Prostate gland (tissue), 2 donors: ENCODE measurements at regions of chr9 and their contacts with region 1.

Region 1: DNA sequence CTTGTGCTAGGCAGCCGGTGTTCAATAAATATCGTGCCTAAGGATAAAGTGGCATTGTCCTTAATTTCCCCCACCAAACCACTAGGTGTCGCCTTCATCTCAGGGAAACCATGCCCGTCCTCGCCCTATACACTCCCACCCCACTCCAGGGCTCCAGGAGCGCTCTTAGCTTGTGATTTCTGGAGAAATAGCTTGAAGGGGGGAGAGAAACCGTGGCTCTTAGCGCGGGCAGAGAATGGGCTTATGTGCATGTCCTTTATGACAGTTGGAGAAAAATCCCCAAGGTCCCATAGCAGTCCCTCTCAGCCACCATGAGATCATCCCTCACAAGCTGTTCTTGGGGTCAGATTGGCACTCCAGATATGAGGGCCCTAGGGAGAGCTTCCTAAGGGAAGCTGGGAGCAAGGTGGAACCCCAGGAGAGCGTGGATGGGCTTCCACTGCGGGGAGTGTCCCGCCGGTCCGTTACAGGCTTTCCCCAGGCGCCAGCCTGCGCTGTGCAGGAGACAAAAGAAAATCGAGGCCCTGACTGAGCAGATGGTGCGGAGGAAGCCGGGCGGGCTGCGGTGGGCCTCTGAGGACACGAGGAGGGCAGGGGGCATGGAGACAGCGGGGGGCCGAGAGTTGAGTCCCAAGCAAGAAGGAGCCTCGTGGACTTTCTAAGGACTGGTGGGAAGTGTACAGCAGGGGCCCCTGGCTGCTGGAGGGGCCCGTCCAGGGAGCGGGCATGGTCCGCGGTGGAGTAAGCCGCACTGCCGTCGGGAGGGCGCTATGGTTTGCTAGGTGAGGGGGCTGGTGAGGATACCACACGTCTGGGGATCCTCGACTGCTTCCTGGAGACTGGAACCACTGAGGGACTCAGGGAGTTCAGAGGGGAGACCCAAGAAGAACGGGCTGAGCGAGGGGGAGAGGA is 750 bp upstream of the NPR2 start:
- DNase-seq: peak; percentile 74
- H3K4me3 ChIP-seq: peak overlapping the region; percentile 41 to 50
- H3K27ac ChIP-seq: peak overlapping the region; percentile 36 to 76
- H3K4me1 ChIP-seq: no peaks in the 10 kb centered on the region
- H3K27me3 ChIP-seq: no peaks in the 10 kb centered on the region
- CTCF ChIP-seq: peak; percentile 70 to 90 (median 84)
- POLR2A ChIP-seq: no peak

Region 2: DNA sequence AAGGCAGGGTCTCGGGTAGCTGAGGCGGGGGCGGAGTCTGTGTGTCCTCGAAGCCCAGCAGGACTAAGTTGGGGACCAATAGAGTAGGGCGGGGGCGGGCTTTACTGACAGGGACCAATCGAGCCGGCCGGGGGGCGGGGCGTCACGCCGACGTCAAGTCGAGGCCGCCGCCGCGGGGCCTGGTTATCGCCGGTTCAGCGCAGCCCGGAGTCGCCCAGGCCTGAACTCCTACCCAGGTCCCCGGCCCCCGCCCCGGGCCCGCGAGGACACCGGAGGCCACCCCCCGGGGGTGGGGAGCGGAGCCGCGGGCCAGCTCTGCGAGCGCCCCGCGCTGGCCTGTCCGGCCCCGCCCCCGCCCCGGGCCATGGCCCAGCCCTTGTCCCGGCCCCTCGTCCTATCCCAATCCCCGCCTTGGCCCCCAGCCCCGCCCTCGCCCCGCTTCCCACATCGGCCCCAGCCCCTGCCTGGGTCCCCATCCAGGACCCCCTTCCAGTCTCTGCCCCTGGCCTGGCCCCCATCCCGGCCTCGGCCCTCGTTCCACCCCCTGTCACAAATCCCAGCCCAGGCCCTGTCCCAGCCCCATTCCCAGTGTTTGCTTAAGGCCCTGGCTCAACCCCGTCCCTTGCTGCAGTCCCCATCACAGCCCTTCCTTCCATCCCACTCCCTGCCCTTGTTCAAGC is 38.6 kb after region 1 on chr9 and contains the start of gene TMEM8B:
- intact Hi-C with region 1: loop called (anchors 2 kb)
- DNase-seq: peak; percentile 99
- H3K4me3 ChIP-seq: peak within 1 kb of the TSS; percentile 73 to 99
- H3K27ac ChIP-seq: peak within 1 kb of the TSS; percentile 89 to 99
- H3K4me1 ChIP-seq: peaks cover 35% of the 10 kb centered on the region
- H3K27me3 ChIP-seq: no peaks in the 10 kb centered on the region
- CTCF ChIP-seq: peak in 1 of 4 experiments; percentile 10
- POLR2A ChIP-seq: peak; percentile 70
- total RNA-seq, gene TMEM8B: 15.8 to 25.9 TPM

Region 3: DNA sequence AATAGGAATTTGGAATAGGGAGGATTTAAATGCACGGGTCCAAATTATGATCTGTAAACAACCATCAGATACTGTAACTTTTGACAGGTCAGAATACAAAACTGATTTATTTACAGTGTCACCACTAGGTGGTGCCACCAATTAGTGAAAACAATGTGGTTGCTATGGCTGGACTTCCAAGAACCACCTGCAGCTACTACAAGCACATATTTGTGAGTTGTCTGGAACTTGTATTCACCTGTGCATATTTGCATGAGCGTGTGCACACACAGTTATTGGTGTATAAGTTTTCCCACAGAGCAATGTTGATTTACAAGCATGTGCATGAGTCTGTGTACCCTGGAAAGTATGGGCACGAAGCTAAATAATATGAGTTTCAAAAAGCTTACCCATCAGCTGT is 112.4 kb after region 1 on chr9:
- intact Hi-C with region 1: no loop called
- DNase-seq: peak; percentile 59
- H3K4me3 ChIP-seq: no peak overlapping the region
- H3K27ac ChIP-seq: peak overlapping the region in 1 of 2 donors; percentile 28
- H3K4me1 ChIP-seq: peaks cover 34% of the 10 kb centered on the region
- H3K27me3 ChIP-seq: no peaks in the 10 kb centered on the region
- CTCF ChIP-seq: peak; percentile 63 to 93 (median 86)
- POLR2A ChIP-seq: no peak